CD14-positive monocyte (primary cell): ENCODE measurements at regions of chr12 and their contacts with region 1.

Region 1: DNA sequence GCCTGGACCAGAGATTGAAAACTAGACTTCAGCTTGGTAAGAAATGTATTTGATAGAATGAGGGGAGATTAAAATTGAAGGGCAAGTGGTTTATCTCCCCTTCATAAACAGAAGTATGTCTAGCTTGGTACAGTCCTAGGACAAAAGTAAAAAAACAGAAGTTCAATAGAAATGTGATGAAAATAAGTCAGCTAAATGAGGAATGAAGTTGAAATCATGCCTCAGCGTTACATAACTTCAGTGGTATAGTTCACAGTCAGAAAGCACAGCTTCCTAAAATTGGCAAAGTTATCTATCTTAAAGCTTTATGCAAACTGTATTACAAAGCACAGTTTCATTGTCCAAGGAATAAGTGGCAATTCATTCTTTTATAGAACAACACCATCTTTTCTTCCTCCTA is 90.2 kb upstream of the SYT10 start:
- DNase-seq: peak; percentile 55 to 67 (median 61)
- H3K4me3 ChIP-seq: peak overlapping the region in 1 of 3 experiments; percentile 38
- H3K4me3 Mint-ChIP-seq: no peak overlapping the region
- H3K27ac ChIP-seq: peak overlapping the region; percentile 68 to 70
- H3K27ac Mint-ChIP-seq: peak overlapping the region; percentile 47 to 90 (median 82)
- H3K4me1 ChIP-seq: peaks cover 27 to 37% of the 10 kb centered on the region in 2 donors
- H3K4me1 Mint-ChIP-seq: peaks cover 7% of the 10 kb centered on the region
- H3K27me3 ChIP-seq: no peaks in the 10 kb centered on the region
- H3K27me3 Mint-ChIP-seq: no peaks in the 10 kb centered on the region
- CTCF ChIP-seq: no peak

Region 2: GRCh38 chr12:33566409-33566808 is 36.6 kb after region 1 on chr12:
- intact Hi-C with region 1: no loop called
- DNase-seq: no peak
- H3K4me3 ChIP-seq: no peak overlapping the region
- H3K4me3 Mint-ChIP-seq: no peak overlapping the region
- H3K27ac ChIP-seq: no peak overlapping the region
- H3K27ac Mint-ChIP-seq: no peak overlapping the region
- H3K4me1 ChIP-seq: no peaks in the 10 kb centered on the region
- H3K4me1 Mint-ChIP-seq: no peaks in the 10 kb centered on the region
- H3K27me3 ChIP-seq: no peaks in the 10 kb centered on the region
- H3K27me3 Mint-ChIP-seq: peaks cover 0 to 10% (median 1%) of the 10 kb centered on the region in 3 donors
- CTCF ChIP-seq: no peak

Region 3: GRCh38 chr12:33609521-33610309 is 79.9 kb after region 1 on chr12:
- intact Hi-C with region 1: loop called in 1 of 2 experiments (anchors 10 kb)
- DNase-seq: no peak
- H3K4me3 ChIP-seq: no peak overlapping the region
- H3K4me3 Mint-ChIP-seq: no peak overlapping the region
- H3K27ac ChIP-seq: no peak overlapping the region
- H3K27ac Mint-ChIP-seq: no peak overlapping the region
- H3K4me1 ChIP-seq: no peaks in the 10 kb centered on the region
- H3K4me1 Mint-ChIP-seq: no peaks in the 10 kb centered on the region
- H3K27me3 ChIP-seq: no peaks in the 10 kb centered on the region
- H3K27me3 Mint-ChIP-seq: peaks cover 0 to 5% (median 2%) of the 10 kb centered on the region in 3 donors
- CTCF ChIP-seq: no peak